Naive thymus-derived CD8-positive, alpha-beta T cell (primary cell): ENCODE measurements at regions of chr14 and their contacts with region 1.

Region 1: GRCh38 chr14:35404449-35405303 is at the start of gene NFKBIA:
- DNase-seq: peak; percentile 88 to 96 (median 92)
- ATAC-seq: peak; percentile 62 to 65
- H3K4me3 Mint-ChIP-seq: peak within 1 kb of the TSS; percentile 91 to 98 (median 94)
- H3K27ac Mint-ChIP-seq: peak within 1 kb of the TSS; percentile 95 to 100 (median 99)
- H3K4me1 Mint-ChIP-seq: peaks cover 32 to 64% (median 57%) of the 10 kb centered on the region in 4 donors
- H3K27me3 Mint-ChIP-seq: no peaks in the 10 kb centered on the region
- polyA plus RNA-seq, gene NFKBIA: 194 to 328 (median 198) TPM

Region 2: GRCh38 chr14:35121887-35122695 is 282.6 kb before region 1 on chr14 and contains the starts of genes PPP2R3C and PRORP:
- POLR2A ChIA-PET with region 1: interaction called, 54 read pairs
- DNase-seq: peak; percentile 77 to 98 (median 92)
- ATAC-seq: peak; percentile 83 to 85
- H3K4me3 Mint-ChIP-seq: peak within 1 kb of the TSS; percentile 98 to 100 (median 100)
- H3K27ac Mint-ChIP-seq: peak within 1 kb of the TSS; percentile 99 to 100 (median 100)
- H3K4me1 Mint-ChIP-seq: peaks cover 31 to 86% (median 74%) of the 10 kb centered on the region in 4 donors
- H3K27me3 Mint-ChIP-seq: no peaks in the 10 kb centered on the region
- polyA plus RNA-seq, gene PPP2R3C: 45.6 to 57.9 (median 52.7) TPM
- polyA plus RNA-seq, gene PRORP: 44.3 to 55.4 (median 49.7) TPM

Region 3: DNA sequence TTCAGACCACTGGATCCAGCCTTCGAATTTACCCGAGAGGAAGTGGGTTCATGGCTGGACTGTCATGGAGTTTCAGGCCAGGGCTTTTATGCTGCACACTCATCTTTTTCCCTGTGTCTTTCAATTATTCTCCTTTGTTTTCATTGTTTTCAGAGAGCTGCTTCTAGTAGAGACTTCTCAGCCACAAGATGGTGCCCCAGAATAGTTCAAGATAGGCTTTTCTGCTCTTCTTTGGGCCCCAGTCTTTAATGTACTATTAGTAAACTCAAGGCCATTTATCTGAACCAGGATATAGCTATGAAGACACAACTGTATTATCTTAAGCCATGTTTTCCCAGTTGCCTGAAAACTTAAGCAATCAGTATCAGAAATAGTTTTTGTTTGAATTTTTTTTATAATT is 142.9 kb before region 1 on chr14:
- POLR2A ChIA-PET with region 1: interaction called, 12 read pairs
- DNase-seq: peak in 3 of 10 donors; percentile 2 to 21 (median 17)
- ATAC-seq: peak; percentile 45 to 65
- H3K4me3 Mint-ChIP-seq: no peak overlapping the region
- H3K27ac Mint-ChIP-seq: peak overlapping the region in 1 of 10 donors; percentile 9
- H3K4me1 Mint-ChIP-seq: peaks cover 0 to 3% (median under 1%) of the 10 kb centered on the region in 4 donors
- H3K27me3 Mint-ChIP-seq: no peaks in the 10 kb centered on the region

Region 4: GRCh38 chr14:35320472-35320871 is 84.2 kb before region 1 on chr14:
- POLR2A ChIA-PET with region 1: interaction called, 11 read pairs
- DNase-seq: no peak
- ATAC-seq: no peak
- H3K4me3 Mint-ChIP-seq: peak overlapping the region in 1 of 10 donors; percentile 41
- H3K27ac Mint-ChIP-seq: peak overlapping the region in 3 of 10 donors; percentile 36 to 65 (median 44)
- H3K4me1 Mint-ChIP-seq: peaks cover 0 to 5% (median 3%) of the 10 kb centered on the region in 4 donors
- H3K27me3 Mint-ChIP-seq: no peaks in the 10 kb centered on the region

Region 5: DNA sequence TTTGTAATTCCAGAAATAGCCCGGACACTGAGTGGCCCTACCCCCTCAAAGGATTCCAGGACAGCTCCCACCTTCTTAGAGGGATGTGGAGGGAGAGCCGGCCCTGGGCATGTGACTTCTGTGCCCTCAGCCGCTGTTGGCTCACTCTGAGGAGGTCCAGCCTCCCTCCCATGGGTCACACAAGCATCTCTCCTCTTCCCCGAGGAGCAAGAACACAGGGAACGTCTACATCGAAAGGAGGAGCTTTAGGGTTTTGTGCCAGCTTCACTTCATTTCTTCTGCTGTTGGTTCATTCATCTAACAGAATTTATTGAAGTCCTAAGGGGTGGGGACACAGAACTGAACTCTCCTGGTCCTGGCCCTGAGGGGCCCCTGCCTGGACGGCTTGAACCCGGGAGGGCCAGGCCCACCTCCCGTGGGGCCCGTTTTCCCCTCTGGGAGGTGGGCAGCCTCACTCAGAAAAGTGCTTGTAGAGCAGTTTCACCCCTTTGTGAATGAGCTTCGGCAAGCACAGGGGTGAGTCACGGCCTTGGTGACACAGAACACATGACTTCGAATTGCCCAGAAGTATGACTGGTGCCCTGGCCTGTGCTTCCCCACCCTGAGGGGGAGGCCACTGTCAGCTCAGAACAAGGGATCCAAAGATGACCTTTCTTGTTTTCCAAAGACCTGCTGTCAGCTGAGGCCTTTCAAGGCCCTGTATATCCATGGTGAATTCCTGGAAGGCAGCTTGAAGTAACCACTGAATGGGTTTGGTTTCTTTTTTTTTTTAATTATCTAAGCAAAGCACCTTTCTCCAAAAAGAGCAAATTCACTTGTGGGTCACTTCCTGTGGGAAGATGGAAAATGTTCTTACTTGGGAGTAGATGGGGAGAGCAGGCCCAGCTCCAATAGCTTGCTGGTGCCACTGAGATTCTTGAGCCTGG is 39.3 kb before region 1 on chr14:
- POLR2A ChIA-PET with region 1: interaction called, 245 read pairs
- DNase-seq: peak in 1 of 10 donors; percentile 46
- ATAC-seq: peak in 1 of 2 donors; percentile 29
- H3K4me3 Mint-ChIP-seq: peak overlapping the region in 5 of 10 donors; percentile 18 to 47 (median 26)
- H3K27ac Mint-ChIP-seq: peak overlapping the region in 9 of 10 donors; percentile 21 to 95 (median 60)
- H3K4me1 Mint-ChIP-seq: peaks cover 19 to 51% (median 45%) of the 10 kb centered on the region in 4 donors
- H3K27me3 Mint-ChIP-seq: no peaks in the 10 kb centered on the region

Region 6: GRCh38 chr14:35425850-35426249 is 21.2 kb after region 1 on chr14:
- POLR2A ChIA-PET with region 1: no interaction called
- DNase-seq: no peak
- ATAC-seq: no peak
- H3K4me3 Mint-ChIP-seq: no peak overlapping the region
- H3K27ac Mint-ChIP-seq: peak overlapping the region in 1 of 10 donors; percentile 53
- H3K4me1 Mint-ChIP-seq: peaks cover 6 to 8% (median 7%) of the 10 kb centered on the region in 4 donors
- H3K27me3 Mint-ChIP-seq: peaks cover 0 to 2% (median 0%) of the 10 kb centered on the region in 5 donors

Region 7: GRCh38 chr14:35438910-35439713 is 34.4 kb after region 1 on chr14:
- POLR2A ChIA-PET with region 1: no interaction called
- DNase-seq: no peak
- ATAC-seq: no peak
- H3K4me3 Mint-ChIP-seq: no peak overlapping the region
- H3K27ac Mint-ChIP-seq: peak overlapping the region in 1 of 10 donors; percentile 14
- H3K4me1 Mint-ChIP-seq: peaks cover 0 to 3% (median 0%) of the 10 kb centered on the region in 4 donors
- H3K27me3 Mint-ChIP-seq: peaks cover 0 to 3% (median 0%) of the 10 kb centered on the region in 5 donors

Region 8: GRCh38 chr14:35456261-35456660 is 51.6 kb after region 1 on chr14:
- POLR2A ChIA-PET with region 1: no interaction called
- DNase-seq: no peak
- ATAC-seq: no peak
- H3K4me3 Mint-ChIP-seq: no peak overlapping the region
- H3K27ac Mint-ChIP-seq: no peak overlapping the region
- H3K4me1 Mint-ChIP-seq: peaks cover 0 to 1% (median 0%) of the 10 kb centered on the region in 4 donors
- H3K27me3 Mint-ChIP-seq: peaks cover 0 to 16% (median 4%) of the 10 kb centered on the region in 5 donors

Region 9: GRCh38 chr14:35695647-35696046 is 291.0 kb after region 1 on chr14:
- POLR2A ChIA-PET with region 1: no interaction called
- DNase-seq: no peak
- ATAC-seq: no peak
- H3K4me3 Mint-ChIP-seq: no peak overlapping the region
- H3K27ac Mint-ChIP-seq: no peak overlapping the region
- H3K4me1 Mint-ChIP-seq: peaks cover 2 to 10% (median 8%) of the 10 kb centered on the region in 4 donors
- H3K27me3 Mint-ChIP-seq: no peaks in the 10 kb centered on the region